ENCODE measurements at regions of chr19 and their contacts with region 1.

Region 1: DNA sequence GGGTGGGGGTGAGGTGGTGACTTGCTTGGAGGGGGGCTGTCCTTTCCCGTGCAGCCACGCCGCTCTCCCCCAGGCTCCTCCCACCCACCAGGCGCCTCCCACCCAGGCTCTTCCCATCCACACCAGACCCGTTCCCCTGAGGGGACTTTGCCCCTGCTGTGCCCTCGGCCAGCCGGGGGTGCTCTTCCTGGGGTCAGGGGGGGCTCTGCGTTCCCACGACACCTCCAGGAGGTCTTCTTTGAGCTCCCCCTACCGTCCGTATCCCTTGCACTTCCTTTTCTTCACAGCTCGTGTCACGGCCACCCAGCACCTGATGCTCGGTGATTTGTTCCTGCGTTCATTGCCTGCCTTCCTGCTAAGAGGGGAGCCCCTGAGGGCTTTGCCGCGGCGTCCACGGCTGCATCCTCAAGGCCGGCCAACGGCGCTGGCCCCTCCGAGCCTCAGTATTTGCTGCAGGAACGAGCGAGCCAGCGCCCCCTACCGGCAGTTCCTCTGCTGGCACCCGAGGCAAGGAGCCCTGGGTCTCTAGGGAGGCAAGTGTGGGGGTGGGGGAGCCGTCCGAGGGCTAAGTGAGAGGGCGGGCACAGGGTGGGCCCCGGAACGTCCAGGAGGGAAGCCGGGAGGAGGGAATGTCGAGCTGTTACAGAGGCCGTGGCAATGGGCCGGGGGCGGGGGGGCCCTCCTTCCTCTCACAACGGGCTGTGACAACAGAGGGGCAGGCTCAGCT is 11.8 kb downstream of the LRRC4B start:
- DNase-seq: peak; percentile 88 to 98
- ATAC-seq: peak; percentile 78 to 92
- H3K4me3 ChIP-seq: peak overlapping the region; percentile 64
- H3K27ac ChIP-seq: peak overlapping the region; percentile 80 to 89
- H3K4me1 ChIP-seq: peaks cover 14% of the 10 kb centered on the region
- CTCF ChIP-seq: peak; percentile 100
- EP300 ChIP-seq: no peak
- POLR2A ChIP-seq: peak; percentile 38
- RAD21 ChIP-seq: peak; percentile 44 to 61

Region 2: GRCh38 chr19:50214761-50215575 is 341.5 kb before region 1 on chr19:
- CTCF ChIA-PET with region 1: no interaction called
- POLR2A ChIA-PET with region 1: no interaction called
- DNase-seq: no peak
- ATAC-seq: no peak; a peak in 1 of 6 replicates
- H3K4me3 ChIP-seq: no peak overlapping the region
- H3K27ac ChIP-seq: no peak overlapping the region
- H3K4me1 ChIP-seq: no peaks in the 10 kb centered on the region
- CTCF ChIP-seq: no peak
- EP300 ChIP-seq: no peak
- POLR2A ChIP-seq: no peak
- RAD21 ChIP-seq: no peak

Region 3: GRCh38 chr19:50476224-50476942 is 80.1 kb before region 1 on chr19 and contains the starts of genes EMC10 and GARIN5A:
- CTCF ChIA-PET with region 1: interaction called, 10 read pairs
- POLR2A ChIA-PET with region 1: no interaction called
- DNase-seq: peak; percentile 99
- ATAC-seq: peak; percentile 73 to 91
- H3K4me3 ChIP-seq: peak within 1 kb of the TSS; percentile 86
- H3K27ac ChIP-seq: peak within 1 kb of the TSS; percentile 87 to 93
- H3K4me1 ChIP-seq: peaks cover 12% of the 10 kb centered on the region
- CTCF ChIP-seq: no peak
- EP300 ChIP-seq: no peak
- POLR2A ChIP-seq: peak; percentile 96
- RAD21 ChIP-seq: no peak
- polyA plus RNA-seq, gene EMC10: 52.8 and 54.0 TPM in 2 replicates
- polyA plus RNA-seq, gene GARIN5A: 0.57 and 1.1 TPM in 2 replicates

Region 4: DNA sequence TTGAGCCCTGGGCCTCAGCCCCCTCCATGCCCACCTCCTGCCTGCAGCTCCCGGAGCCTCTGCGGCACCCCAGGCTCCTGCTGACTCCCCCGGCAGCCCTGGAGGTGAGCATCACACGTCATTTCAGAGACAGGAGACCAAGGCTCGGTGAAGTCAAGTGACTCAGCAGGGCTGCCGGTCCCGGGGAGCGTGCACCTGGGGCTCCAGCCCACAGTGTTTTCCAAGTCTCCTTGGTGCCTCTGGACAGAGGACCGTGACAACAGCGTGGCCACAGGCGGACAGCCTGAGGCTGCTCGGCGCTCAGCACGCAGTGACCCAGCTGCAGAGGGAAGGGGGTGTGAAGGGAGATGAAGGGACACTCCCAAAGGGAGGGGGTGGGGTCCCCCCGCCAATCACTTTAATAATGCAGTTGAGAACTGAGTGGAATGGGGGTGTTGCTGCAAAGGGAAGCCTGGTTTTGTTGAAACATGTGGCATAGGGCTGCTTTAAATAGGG is 25.3 kb before region 1 on chr19:
- CTCF ChIA-PET with region 1: interaction called, 355 read pairs
- POLR2A ChIA-PET with region 1: no interaction called
- DNase-seq: no peak
- ATAC-seq: peak; percentile 21 to 29; a peak in 2 of 6 replicates
- H3K4me3 ChIP-seq: no peak overlapping the region
- H3K27ac ChIP-seq: no peak overlapping the region
- H3K4me1 ChIP-seq: 0 out of 3 replicates have a peak, but pooled peaks cover 3% of the 10 kb centered on the region
- CTCF ChIP-seq: no peak
- EP300 ChIP-seq: no peak
- POLR2A ChIP-seq: no peak
- RAD21 ChIP-seq: no peak

Region 5: GRCh38 chr19:50580970-50581634 is 24.7 kb after region 1 on chr19:
- CTCF ChIA-PET with region 1: interaction called, 98 read pairs
- POLR2A ChIA-PET with region 1: interaction called, 5 read pairs
- DNase-seq: no peak
- ATAC-seq: no peak
- H3K4me3 ChIP-seq: no peak overlapping the region
- H3K27ac ChIP-seq: no peak overlapping the region
- H3K4me1 ChIP-seq: no peaks in the 10 kb centered on the region
- CTCF ChIP-seq: no peak
- EP300 ChIP-seq: no peak
- POLR2A ChIP-seq: no peak
- RAD21 ChIP-seq: no peak

Region 6: DNA sequence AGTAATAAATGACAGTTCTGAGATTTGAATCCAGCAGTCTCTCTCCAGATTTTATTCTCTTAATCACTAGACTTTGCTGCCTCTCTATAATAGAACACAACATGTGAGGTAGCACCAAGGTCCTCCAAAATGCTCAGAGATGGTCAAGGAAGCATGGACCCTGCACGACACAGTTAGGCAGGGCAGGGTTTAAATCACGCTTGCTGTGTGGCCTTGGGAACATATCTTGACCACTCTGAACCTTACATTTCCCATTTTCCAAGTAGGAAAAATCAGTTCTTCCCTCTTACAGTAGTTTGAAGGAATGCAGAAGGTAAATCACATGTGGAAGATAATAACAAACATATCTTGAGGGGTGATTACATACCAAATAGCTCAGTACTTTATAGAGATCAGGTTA is 76.9 kb after region 1 on chr19:
- CTCF ChIA-PET with region 1: interaction called, 10 read pairs
- POLR2A ChIA-PET with region 1: no interaction called
- DNase-seq: no peak
- ATAC-seq: no peak
- H3K4me3 ChIP-seq: no peak overlapping the region
- H3K27ac ChIP-seq: no peak overlapping the region
- H3K4me1 ChIP-seq: no peaks in the 10 kb centered on the region
- CTCF ChIP-seq: no peak
- EP300 ChIP-seq: no peak
- POLR2A ChIP-seq: no peak
- RAD21 ChIP-seq: no peak

Region 7: GRCh38 chr19:50686310-50687032 is 130.0 kb after region 1 on chr19:
- CTCF ChIA-PET with region 1: no interaction called
- POLR2A ChIA-PET with region 1: no interaction called
- DNase-seq: no peak
- ATAC-seq: peak in 1 of 2 experiments; percentile 14; a peak in 1 of 6 replicates
- H3K4me3 ChIP-seq: 0 out of 3 replicates have a peak overlapping the region, but pooled peaks have one; percentile 12
- H3K27ac ChIP-seq: no peak overlapping the region
- H3K4me1 ChIP-seq: peaks cover 4% of the 10 kb centered on the region; the same call in 2 of the 3 replicates
- CTCF ChIP-seq: no peak
- EP300 ChIP-seq: no peak
- POLR2A ChIP-seq: no peak
- RAD21 ChIP-seq: no peak

Region 8: GRCh38 chr19:50777754-50778303 is 221.4 kb after region 1 on chr19:
- CTCF ChIA-PET with region 1: interaction called, 15 read pairs
- POLR2A ChIA-PET with region 1: no interaction called
- DNase-seq: peak in 1 of 2 experiments; percentile 71
- ATAC-seq: peak; percentile 36 to 62; a peak in 5 of 6 replicates
- H3K4me3 ChIP-seq: peak overlapping the region; percentile 29; the same call in 2 of the 3 replicates
- H3K27ac ChIP-seq: no peak overlapping the region
- H3K4me1 ChIP-seq: peaks cover 14% of the 10 kb centered on the region; the same call in 1 of the 3 replicates
- CTCF ChIP-seq: no peak
- EP300 ChIP-seq: no peak
- POLR2A ChIP-seq: no peak
- RAD21 ChIP-seq: no peak